Right ventricle myocardium inferior (tissue), 1 donor: ENCODE measurements at regions of chr7 and their contacts with region 1.

Region 1: GRCh38 chr7:25565949-25566348 is 337.7 kb upstream of the NPVF start:
- DNase-seq: peak; percentile 73
- ATAC-seq: no peak

Region 2: GRCh38 chr7:25389489-25390106 is 176.4 kb before region 1 on chr7:
- intact Hi-C with region 1: loop called (anchors 1 kb)
- DNase-seq: no peak
- ATAC-seq: peak; percentile 27

Region 3: DNA sequence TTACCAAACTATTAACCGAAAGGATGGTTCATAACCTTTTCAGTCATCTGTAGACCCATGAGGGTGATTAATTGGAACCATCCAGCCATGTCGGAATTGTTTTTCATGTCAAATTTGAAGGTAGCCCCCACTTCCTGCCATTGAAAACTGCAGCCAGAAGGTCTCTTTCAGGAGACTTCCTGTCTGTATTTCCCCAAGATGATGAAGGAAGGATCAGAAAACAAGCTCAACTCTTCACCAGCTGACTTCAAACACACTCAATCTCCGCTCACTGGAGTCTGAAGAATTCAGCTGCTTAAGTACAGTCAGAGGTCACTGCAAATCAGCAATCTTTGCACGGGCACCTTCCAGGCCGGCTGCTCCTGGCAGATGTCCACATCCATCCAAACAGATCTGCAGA is 45.9 kb before region 1 on chr7:
- intact Hi-C with region 1: no loop called
- DNase-seq: no peak
- ATAC-seq: no peak